ENCODE measurements at regions of chr18 and their contacts with region 1.

Region 1: GRCh38 chr18:58128381-58129374 is 84.7 kb downstream of the NEDD4L start:
- DNase-seq: no peak
- ATAC-seq: no peak
- H3K4me3 ChIP-seq: no peak overlapping the region
- H3K27ac ChIP-seq: no peak overlapping the region
- H3K4me1 ChIP-seq: no peaks in the 10 kb centered on the region
- H3K27me3 ChIP-seq: no peaks in the 10 kb centered on the region

Region 2: GRCh38 chr18:57621246-57621604 is 507.5 kb before region 1 on chr18:
- intact Hi-C with region 1: loop called in 1 of 2 experiments (anchors 5 kb)
- DNase-seq: no peak
- ATAC-seq: peak; percentile 38
- H3K4me3 ChIP-seq: peak overlapping the region; percentile 88 to 90
- H3K27ac ChIP-seq: peak overlapping the region in 1 of 2 donors; percentile 82
- H3K4me1 ChIP-seq: no peaks in the 10 kb centered on the region
- H3K27me3 ChIP-seq: no peaks in the 10 kb centered on the region

Region 3: DNA sequence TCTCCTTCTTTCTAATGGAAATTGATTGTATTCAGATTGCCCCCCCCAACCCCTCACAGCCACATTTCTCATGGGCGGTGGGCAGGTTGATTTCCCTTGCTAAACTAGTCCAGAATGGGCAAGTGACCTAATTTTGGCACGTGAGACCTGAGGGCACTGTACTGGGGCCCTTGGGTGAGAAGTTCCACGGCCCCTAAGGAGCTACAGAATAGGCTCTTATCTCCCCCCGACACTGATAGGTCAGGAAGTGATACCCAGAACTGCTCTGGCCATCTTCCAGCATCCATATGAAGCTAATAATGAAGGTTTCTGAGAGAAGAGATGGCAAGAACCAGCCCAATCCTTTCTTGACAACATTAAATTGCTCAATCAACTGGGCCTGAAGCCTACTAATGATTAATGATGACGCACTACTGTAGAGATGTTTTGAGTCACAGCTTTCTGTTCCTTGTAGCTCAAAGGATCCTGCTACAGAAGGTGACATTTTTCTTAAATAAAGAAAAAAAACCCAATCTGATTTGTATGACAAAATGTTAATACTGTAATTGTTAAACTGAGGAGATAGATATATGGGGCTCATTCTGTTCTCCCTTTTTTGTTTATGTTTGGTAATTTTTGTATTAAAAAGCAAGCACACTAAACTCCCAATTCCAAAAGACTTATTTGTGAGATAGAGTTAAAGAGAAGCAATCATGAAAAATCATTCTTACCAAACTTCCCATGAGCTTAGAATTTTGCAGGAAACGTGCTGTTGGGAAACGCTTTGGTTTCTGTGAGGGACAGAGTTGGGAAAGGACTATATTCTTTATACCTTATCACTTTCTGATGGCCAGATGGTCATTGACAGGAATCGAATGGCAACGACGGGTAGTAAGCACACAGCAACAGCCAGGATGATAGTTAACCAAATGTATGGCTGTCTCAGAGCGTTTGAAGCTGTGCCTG is 478.9 kb before region 1 on chr18:
- intact Hi-C with region 1: loop called in 1 of 2 experiments (anchors 10 kb)
- DNase-seq: no peak
- ATAC-seq: peak; percentile 66
- H3K4me3 ChIP-seq: no peak overlapping the region
- H3K27ac ChIP-seq: no peak overlapping the region
- H3K4me1 ChIP-seq: peaks cover 0 to 4% of the 10 kb centered on the region in 2 donors
- H3K27me3 ChIP-seq: no peaks in the 10 kb centered on the region

Region 4: GRCh38 chr18:57881818-57882413 is 246.8 kb before region 1 on chr18:
- intact Hi-C with region 1: loop called (anchors 5 kb)
- DNase-seq: peak; percentile 67 to 77
- ATAC-seq: peak; percentile 82
- H3K4me3 ChIP-seq: no peak overlapping the region
- H3K27ac ChIP-seq: no peak overlapping the region
- H3K4me1 ChIP-seq: no peaks in the 10 kb centered on the region
- H3K27me3 ChIP-seq: no peaks in the 10 kb centered on the region

Region 5: GRCh38 chr18:58176915-58177717 is 48.4 kb after region 1 on chr18:
- intact Hi-C with region 1: no loop called
- DNase-seq: no peak
- ATAC-seq: no peak
- H3K4me3 ChIP-seq: no peak overlapping the region
- H3K27ac ChIP-seq: no peak overlapping the region
- H3K4me1 ChIP-seq: no peaks in the 10 kb centered on the region
- H3K27me3 ChIP-seq: no peaks in the 10 kb centered on the region

Region 6: GRCh38 chr18:58344861-58345463 is 216.3 kb after region 1 on chr18:
- intact Hi-C with region 1: no loop called
- DNase-seq: no peak
- ATAC-seq: no peak
- H3K4me3 ChIP-seq: no peak overlapping the region
- H3K27ac ChIP-seq: no peak overlapping the region
- H3K4me1 ChIP-seq: no peaks in the 10 kb centered on the region
- H3K27me3 ChIP-seq: no peaks in the 10 kb centered on the region

Region 7: GRCh38 chr18:59470561-59471121 is 1342.0 kb after region 1 on chr18:
- intact Hi-C with region 1: no loop called
- DNase-seq: no peak
- ATAC-seq: no peak
- H3K4me3 ChIP-seq: no peak overlapping the region
- H3K27ac ChIP-seq: no peak overlapping the region
- H3K4me1 ChIP-seq: no peaks in the 10 kb centered on the region
- H3K27me3 ChIP-seq: no peaks in the 10 kb centered on the region